K562 (cell line): ENCODE measurements at regions of chr22 and their contacts with region 1.

Region 1: GRCh38 chr22:23270212-23270733 is 90.0 kb downstream of the BCR start:
- DNase-seq: peak in 3 of 4 experiments; percentile 61 to 82 (median 77)
- ATAC-seq: peak; percentile 31
- H3K4me3 ChIP-seq: no peak overlapping the region
- H3K27ac ChIP-seq: no peak overlapping the region
- H3K4me1 ChIP-seq: peaks cover 4 to 34% of the 10 kb centered on the region in 2 experiments; a peak in 4 of 5 replicates
- H3K27me3 ChIP-seq: no peaks in the 10 kb centered on the region
- CTCF ChIP-seq: peak in 2 of 3 experiments; percentile 75 to 87; a peak in 4 of 6 replicates
- EP300 ChIP-seq: no peak
- POLR2A ChIP-seq: no peak
- RAD21 ChIP-seq: peak in 1 of 2 experiments; percentile 82; a peak in 2 of 4 replicates

Region 2: GRCh38 chr22:23225724-23226496 is 44.4 kb before region 1 on chr22:
- CTCF ChIA-PET with region 1: no interaction called
- POLR2A ChIA-PET with region 1: interaction called, 13 read pairs
- in situ Hi-C with region 1: no loop called
- intact Hi-C with region 1: no loop called
- DNase-seq: peak in 3 of 4 experiments; percentile 59 to 72 (median 59)
- ATAC-seq: no peak
- H3K4me3 ChIP-seq: no peak overlapping the region
- H3K27ac ChIP-seq: no peak overlapping the region
- H3K4me1 ChIP-seq: peaks cover 48 to 50% of the 10 kb centered on the region in 2 experiments
- H3K27me3 ChIP-seq: no peaks in the 10 kb centered on the region
- CTCF ChIP-seq: no peak
- EP300 ChIP-seq: no peak
- POLR2A ChIP-seq: no peak
- RAD21 ChIP-seq: no peak

Region 3: GRCh38 chr22:23248583-23248982 is 21.7 kb before region 1 on chr22:
- CTCF ChIA-PET with region 1: interaction called, 3 read pairs
- POLR2A ChIA-PET with region 1: interaction called, 193 read pairs
- in situ Hi-C with region 1: no loop called
- intact Hi-C with region 1: no loop called
- DNase-seq: peak; percentile 61 to 83 (median 70)
- ATAC-seq: peak; percentile 44
- H3K4me3 ChIP-seq: no peak overlapping the region
- H3K27ac ChIP-seq: no peak overlapping the region
- H3K4me1 ChIP-seq: peaks cover 39 to 56% of the 10 kb centered on the region in 2 experiments
- H3K27me3 ChIP-seq: no peaks in the 10 kb centered on the region
- CTCF ChIP-seq: no peak
- EP300 ChIP-seq: no peak
- POLR2A ChIP-seq: no peak
- RAD21 ChIP-seq: no peak

Region 4: GRCh38 chr22:23256986-23257888 is 13.0 kb before region 1 on chr22:
- CTCF ChIA-PET with region 1: interaction called, 3 read pairs
- POLR2A ChIA-PET with region 1: interaction called, 193 read pairs
- in situ Hi-C with region 1: no loop called
- intact Hi-C with region 1: no loop called
- DNase-seq: peak in 3 of 4 experiments; percentile 57 to 70 (median 69)
- ATAC-seq: no peak
- H3K4me3 ChIP-seq: no peak overlapping the region
- H3K27ac ChIP-seq: no peak overlapping the region
- H3K4me1 ChIP-seq: peaks cover 0 to 29% of the 10 kb centered on the region in 2 experiments; a peak in 2 of 5 replicates
- H3K27me3 ChIP-seq: no peaks in the 10 kb centered on the region
- CTCF ChIP-seq: no peak
- EP300 ChIP-seq: no peak
- POLR2A ChIP-seq: no peak
- RAD21 ChIP-seq: no peak